ENCODE measurements at regions of chr19 and their contacts with region 1.

Region 1: GRCh38 chr19:39435499-39436349 is at the start of gene RPS16:
- DNase-seq: peak; percentile 97 to 99 (median 99)
- ATAC-seq: peak; percentile 86
- H3K4me3 ChIP-seq: peak within 1 kb of the TSS; percentile 96
- H3K4me3 Mint-ChIP-seq: peak within 1 kb of the TSS; percentile 99
- H3K27ac ChIP-seq: peak within 1 kb of the TSS; percentile 87 to 90
- H3K27ac Mint-ChIP-seq: peak within 1 kb of the TSS; percentile 93
- H3K4me1 ChIP-seq: peaks cover 55% of the 10 kb centered on the region
- H3K4me1 Mint-ChIP-seq: peaks cover 54% of the 10 kb centered on the region
- H3K27me3 ChIP-seq: no peaks in the 10 kb centered on the region
- H3K27me3 Mint-ChIP-seq: no peaks in the 10 kb centered on the region
- CTCF ChIP-seq: no peak
- total RNA-seq, gene RPS16: 4,625 to 4,839 TPM

Region 2: DNA sequence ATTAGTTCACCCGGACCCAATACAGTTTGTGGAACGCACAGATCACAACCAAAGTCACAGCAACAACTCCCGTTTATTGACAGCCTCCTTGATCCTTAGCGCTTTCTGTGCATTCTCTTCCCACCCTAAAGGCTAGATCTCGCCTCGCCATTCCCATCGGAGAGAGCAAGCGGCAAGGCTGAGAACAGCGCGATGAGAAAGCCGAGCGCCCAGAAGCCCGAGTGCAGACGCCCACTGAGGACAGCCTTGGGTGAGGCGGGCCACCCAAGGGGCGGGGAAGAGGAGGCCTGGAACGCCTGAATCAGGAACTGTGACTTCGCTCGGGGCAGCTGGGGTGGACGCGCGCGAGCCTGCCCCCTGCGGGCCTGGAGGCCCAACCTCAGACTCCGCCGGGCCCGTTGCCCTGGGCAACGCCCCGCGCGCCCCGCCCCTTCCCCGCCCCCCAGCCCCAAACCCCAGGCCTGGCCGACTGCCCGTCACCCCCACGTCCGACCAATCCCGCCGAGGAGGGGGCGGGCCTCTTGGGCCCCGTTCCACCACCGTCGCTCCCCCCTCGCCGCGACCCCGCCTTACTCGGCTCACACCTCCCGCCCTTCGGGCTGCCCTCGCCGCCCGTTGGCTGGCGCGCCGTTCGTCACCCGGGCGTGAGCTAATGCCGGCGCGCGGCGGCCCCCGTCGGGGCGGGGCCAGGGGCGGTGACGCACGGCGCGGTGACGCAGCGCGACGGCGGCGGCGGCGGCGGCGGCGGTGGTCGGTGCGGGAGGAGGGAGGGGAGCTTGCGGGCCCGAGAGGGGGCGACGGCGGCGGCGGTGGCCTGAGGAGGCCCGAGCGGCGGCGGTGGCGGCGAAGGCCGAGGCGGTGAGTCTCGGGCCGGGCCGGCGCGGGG is 93.8 kb before region 1 on chr19 and contains the start of gene SAMD4B:
- CTCF ChIA-PET with region 1: no interaction called
- POLR2A ChIA-PET with region 1: interaction called, 26 read pairs
- intact Hi-C with region 1: loop called in 1 of 2 experiments (anchors 5 kb)
- DNase-seq: peak; percentile 98 to 100 (median 99)
- ATAC-seq: peak; percentile 88
- H3K4me3 ChIP-seq: peak within 1 kb of the TSS; percentile 85
- H3K4me3 Mint-ChIP-seq: peak within 1 kb of the TSS; percentile 99
- H3K27ac ChIP-seq: peak within 1 kb of the TSS; percentile 65 to 82
- H3K27ac Mint-ChIP-seq: peak within 1 kb of the TSS; percentile 91
- H3K4me1 ChIP-seq: peaks cover 64% of the 10 kb centered on the region
- H3K4me1 Mint-ChIP-seq: peaks cover 77% of the 10 kb centered on the region
- H3K27me3 ChIP-seq: no peaks in the 10 kb centered on the region
- H3K27me3 Mint-ChIP-seq: no peaks in the 10 kb centered on the region
- CTCF ChIP-seq: peak; percentile 72
- total RNA-seq, gene SAMD4B: 65.0 to 66.9 TPM

Region 3: DNA sequence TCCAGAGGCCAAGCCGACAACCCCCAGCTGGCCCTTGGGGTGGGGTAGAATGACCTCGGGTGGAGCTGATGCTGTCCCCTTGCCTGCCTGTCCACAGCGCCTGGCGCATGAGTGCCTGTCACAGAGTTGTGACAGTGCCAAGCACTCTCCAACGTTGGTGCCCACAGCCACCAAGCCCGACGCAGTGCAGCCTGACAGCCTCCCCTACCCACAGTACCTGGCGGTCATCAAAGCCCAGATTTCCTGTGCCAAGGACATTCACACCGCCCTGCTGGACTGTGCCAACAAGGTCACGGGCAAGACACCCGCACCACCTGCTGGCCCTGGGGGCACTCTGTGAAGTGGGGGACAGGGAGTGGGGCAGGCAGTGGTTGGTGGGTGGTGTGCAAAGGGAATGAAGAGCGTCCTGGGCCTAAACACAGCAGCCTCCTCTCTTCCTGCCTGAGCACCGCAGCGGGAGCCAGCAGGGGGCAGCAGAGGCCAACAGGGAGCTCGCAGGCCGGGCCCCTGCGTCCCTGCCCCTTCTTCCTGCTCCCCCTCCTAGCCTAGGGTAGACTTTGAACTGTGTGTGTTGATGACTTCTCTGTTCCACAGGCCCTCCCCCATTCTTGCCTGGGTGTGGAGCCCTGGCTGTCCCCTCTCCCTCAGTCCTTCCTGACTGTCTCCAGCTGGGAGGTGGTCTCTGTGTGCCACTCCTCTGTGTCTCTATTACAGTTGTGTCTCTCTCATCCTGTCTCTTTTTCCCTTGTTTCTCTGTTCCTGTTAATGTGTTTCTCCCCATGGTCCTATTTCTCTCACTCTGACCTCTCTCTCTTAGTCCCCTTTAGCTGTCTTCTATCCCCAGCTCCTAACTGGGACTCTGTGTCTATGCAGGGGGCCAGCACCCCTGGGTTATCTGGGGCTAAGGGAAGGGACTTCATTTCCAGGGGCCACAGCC is 38.1 kb before region 1 on chr19:
- CTCF ChIA-PET with region 1: interaction called, 10 read pairs
- POLR2A ChIA-PET with region 1: interaction called, 30 read pairs
- intact Hi-C with region 1: no loop called
- DNase-seq: peak; percentile 87 to 98 (median 94)
- ATAC-seq: peak; percentile 43
- H3K4me3 ChIP-seq: peak overlapping the region; percentile 31
- H3K4me3 Mint-ChIP-seq: peak overlapping the region; percentile 63
- H3K27ac ChIP-seq: peak overlapping the region; percentile 90 to 100
- H3K27ac Mint-ChIP-seq: peak overlapping the region; percentile 98
- H3K4me1 ChIP-seq: peaks cover 68% of the 10 kb centered on the region
- H3K4me1 Mint-ChIP-seq: peaks cover 54% of the 10 kb centered on the region
- H3K27me3 ChIP-seq: no peaks in the 10 kb centered on the region
- H3K27me3 Mint-ChIP-seq: no peaks in the 10 kb centered on the region
- CTCF ChIP-seq: peak; percentile 91

Region 4: DNA sequence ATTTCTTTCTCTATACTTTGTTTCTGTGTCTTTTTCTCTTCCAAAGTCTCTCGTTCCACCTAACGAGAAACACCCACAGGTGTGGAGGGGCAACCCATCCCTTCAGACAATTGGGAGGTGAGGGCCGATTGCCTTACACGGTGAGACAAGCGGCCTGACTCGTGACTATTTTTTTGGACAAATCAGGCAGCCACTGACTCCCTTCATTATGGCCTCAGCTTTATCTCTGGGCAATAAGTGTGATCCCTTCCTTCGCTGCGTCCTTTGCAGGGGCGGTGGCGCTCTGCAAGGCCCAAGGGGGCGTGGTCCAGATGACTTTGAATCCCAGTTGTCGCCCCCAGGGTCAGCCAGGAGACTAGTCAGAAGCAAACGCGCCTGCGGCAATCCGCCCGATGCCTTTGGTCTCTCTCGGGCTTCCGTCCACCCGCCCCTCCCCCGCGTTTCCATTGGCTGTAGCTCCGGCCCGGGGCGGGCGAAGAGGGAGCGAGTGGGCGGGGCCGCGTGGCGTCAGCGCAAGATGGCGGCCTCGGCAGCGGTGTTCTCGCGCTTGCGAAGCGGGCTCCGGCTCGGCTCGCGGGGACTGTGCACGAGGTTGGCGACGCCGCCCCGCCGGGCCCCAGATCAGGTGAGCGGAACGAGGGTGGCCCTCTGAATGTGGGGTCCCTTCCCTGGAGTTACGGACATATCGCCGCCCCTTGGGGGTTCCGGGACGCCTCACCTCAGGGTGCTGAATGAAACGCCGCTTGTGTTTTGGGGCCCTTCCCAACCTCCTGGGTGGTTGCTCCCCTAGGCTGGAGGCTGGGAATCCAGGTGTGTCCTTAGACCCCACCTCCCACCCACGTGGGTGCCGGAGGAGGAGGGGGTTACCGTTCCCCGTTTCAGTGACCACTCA is 44.9 kb after region 1 on chr19 and contains the start of gene TIMM50:
- CTCF ChIA-PET with region 1: no interaction called
- POLR2A ChIA-PET with region 1: interaction called, 11 read pairs
- intact Hi-C with region 1: loop called in 1 of 2 experiments (anchors 2 kb)
- DNase-seq: peak; percentile 94 to 99 (median 97)
- ATAC-seq: peak; percentile 97
- H3K4me3 ChIP-seq: peak within 1 kb of the TSS; percentile 99
- H3K4me3 Mint-ChIP-seq: peak within 1 kb of the TSS; percentile 92
- H3K27ac ChIP-seq: peak within 1 kb of the TSS; percentile 62 to 70
- H3K27ac Mint-ChIP-seq: peak within 1 kb of the TSS; percentile 73
- H3K4me1 ChIP-seq: peaks cover 23% of the 10 kb centered on the region
- H3K4me1 Mint-ChIP-seq: peaks cover 31% of the 10 kb centered on the region
- H3K27me3 ChIP-seq: no peaks in the 10 kb centered on the region
- H3K27me3 Mint-ChIP-seq: no peaks in the 10 kb centered on the region
- CTCF ChIP-seq: no peak
- total RNA-seq, gene TIMM50: 38.3 to 43.4 TPM

Region 5: DNA sequence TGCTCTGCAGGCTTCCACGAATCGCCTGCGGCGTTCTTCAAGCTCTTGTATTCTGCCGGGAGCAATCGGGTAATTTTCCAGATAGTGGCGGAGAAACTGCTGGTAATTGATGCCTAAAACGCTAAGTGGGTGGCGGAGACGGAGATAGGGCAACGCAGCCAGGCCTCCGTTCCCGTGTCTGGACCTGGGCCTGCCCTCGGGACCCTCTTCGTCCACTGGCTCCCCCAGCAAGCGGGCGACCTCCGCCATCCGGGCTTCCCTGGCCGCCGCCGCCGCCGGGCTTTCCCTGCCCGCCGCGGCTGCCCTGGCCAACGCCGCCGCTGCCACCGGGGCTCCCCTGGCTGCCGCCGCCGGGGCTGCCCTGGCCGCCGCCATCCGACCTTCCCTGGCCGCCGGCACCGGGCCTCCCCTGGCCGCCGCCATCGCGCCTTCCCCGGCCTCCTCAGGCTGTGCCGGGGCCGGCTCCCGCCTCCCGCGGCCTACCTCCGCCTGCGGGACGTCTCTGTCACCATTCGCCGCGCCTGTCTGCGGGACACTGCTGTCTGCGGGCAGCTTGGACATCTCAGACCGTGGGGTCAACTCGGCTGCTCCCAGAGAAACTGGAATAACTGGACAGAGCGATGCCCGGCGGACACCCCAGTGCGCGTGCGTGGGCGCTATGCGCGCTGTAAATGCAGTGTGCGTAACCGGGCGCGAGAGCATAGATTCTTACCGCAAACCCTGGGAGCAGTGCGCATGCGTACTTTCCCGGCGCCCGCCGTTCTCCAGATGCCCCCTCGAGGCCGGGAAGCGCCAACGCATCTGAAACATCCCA is 104.0 kb after region 1 on chr19 and contains the start of gene EID2:
- CTCF ChIA-PET with region 1: no interaction called
- POLR2A ChIA-PET with region 1: interaction called, 11 read pairs
- intact Hi-C with region 1: loop called in 1 of 2 experiments (anchors 2 kb)
- DNase-seq: peak; percentile 88 to 98 (median 93)
- ATAC-seq: peak; percentile 91
- H3K4me3 ChIP-seq: peak within 1 kb of the TSS; percentile 73
- H3K4me3 Mint-ChIP-seq: peak within 1 kb of the TSS; percentile 98
- H3K27ac ChIP-seq: peak within 1 kb of the TSS; percentile 93
- H3K27ac Mint-ChIP-seq: peak within 1 kb of the TSS; percentile 96
- H3K4me1 ChIP-seq: peaks cover 32% of the 10 kb centered on the region
- H3K4me1 Mint-ChIP-seq: peaks cover 71% of the 10 kb centered on the region
- H3K27me3 ChIP-seq: no peaks in the 10 kb centered on the region
- H3K27me3 Mint-ChIP-seq: no peaks in the 10 kb centered on the region
- CTCF ChIP-seq: no peak
- total RNA-seq, gene EID2: 17.2 to 18.1 TPM

Region 6: GRCh38 chr19:39833464-39834286 is 398.0 kb after region 1 on chr19 and contains the start of gene DYRK1B:
- CTCF ChIA-PET with region 1: no interaction called
- POLR2A ChIA-PET with region 1: interaction called, 7 read pairs
- intact Hi-C with region 1: loop called in 1 of 2 experiments (anchors 5 kb)
- DNase-seq: peak; percentile 96 to 100 (median 98)
- ATAC-seq: peak; percentile 86
- H3K4me3 ChIP-seq: peak within 1 kb of the TSS; percentile 88
- H3K4me3 Mint-ChIP-seq: peak within 1 kb of the TSS; percentile 81
- H3K27ac ChIP-seq: peak within 1 kb of the TSS; percentile 96 to 99
- H3K27ac Mint-ChIP-seq: peak within 1 kb of the TSS; percentile 68
- H3K4me1 ChIP-seq: peaks cover 29% of the 10 kb centered on the region
- H3K4me1 Mint-ChIP-seq: peaks cover 20% of the 10 kb centered on the region
- H3K27me3 ChIP-seq: no peaks in the 10 kb centered on the region
- H3K27me3 Mint-ChIP-seq: no peaks in the 10 kb centered on the region
- CTCF ChIP-seq: no peak
- total RNA-seq, gene DYRK1B: 18.9 to 19.4 TPM

Region 7: DNA sequence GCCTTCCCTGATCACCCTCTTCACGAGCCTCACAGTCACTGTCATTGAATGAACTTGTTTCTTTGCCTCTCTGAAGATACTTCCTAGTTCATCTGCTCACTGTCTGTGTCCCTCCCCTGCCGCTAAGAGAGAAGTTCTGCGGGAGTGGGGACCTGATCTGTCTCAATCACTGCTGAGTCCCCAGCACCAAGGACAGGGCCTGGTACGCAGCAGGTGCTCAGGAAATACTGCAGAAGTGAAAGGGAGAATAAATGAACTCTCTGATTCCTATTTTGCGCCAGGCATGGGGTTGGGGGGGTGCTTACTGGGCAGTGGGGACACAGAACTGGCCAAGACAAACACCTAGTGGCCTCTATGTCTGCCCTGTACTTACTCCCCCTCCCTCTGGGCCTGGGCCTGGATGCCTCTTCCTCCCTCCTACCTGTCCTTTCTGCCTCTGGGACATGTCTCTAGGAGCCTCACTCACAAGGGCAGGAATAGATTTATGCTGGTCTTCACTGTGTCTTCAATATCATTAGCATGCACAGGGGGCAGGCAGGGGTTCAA is 481.2 kb after region 1 on chr19:
- CTCF ChIA-PET with region 1: no interaction called
- POLR2A ChIA-PET with region 1: no interaction called
- intact Hi-C with region 1: no loop called
- DNase-seq: no peak
- ATAC-seq: no peak
- H3K4me3 ChIP-seq: no peak overlapping the region
- H3K4me3 Mint-ChIP-seq: peak overlapping the region; percentile 30
- H3K27ac ChIP-seq: no peak overlapping the region
- H3K27ac Mint-ChIP-seq: peak overlapping the region; percentile 42
- H3K4me1 ChIP-seq: peaks cover 6% of the 10 kb centered on the region
- H3K4me1 Mint-ChIP-seq: peaks cover 21% of the 10 kb centered on the region
- H3K27me3 ChIP-seq: no peaks in the 10 kb centered on the region
- H3K27me3 Mint-ChIP-seq: no peaks in the 10 kb centered on the region
- CTCF ChIP-seq: no peak

Region 8: DNA sequence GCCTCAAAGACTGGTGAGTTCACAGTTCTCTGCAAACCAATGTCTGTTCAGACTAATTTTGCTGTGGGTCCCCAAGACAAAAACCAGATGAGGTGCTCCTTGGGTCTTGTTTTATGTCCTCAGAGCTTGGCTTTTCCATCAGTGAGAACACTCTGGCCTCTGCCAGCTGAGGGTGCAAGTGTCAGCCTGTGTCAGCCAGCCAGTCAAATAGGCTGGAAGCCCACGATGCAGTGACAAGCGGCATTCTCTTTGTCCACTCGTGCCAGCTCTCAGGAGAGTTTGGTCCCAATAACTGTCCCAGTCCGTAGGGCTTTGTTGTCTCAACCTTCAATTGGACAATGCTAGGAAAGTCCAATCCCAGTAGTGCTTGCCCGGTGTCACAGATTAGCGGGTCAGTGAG is 858.8 kb after region 1 on chr19:
- CTCF ChIA-PET with region 1: no interaction called
- POLR2A ChIA-PET with region 1: no interaction called
- intact Hi-C with region 1: no loop called
- DNase-seq: no peak
- ATAC-seq: no peak
- H3K4me3 ChIP-seq: no peak overlapping the region
- H3K4me3 Mint-ChIP-seq: no peak overlapping the region
- H3K27ac ChIP-seq: no peak overlapping the region
- H3K27ac Mint-ChIP-seq: no peak overlapping the region
- H3K4me1 ChIP-seq: no peaks in the 10 kb centered on the region
- H3K4me1 Mint-ChIP-seq: no peaks in the 10 kb centered on the region
- H3K27me3 ChIP-seq: no peaks in the 10 kb centered on the region
- H3K27me3 Mint-ChIP-seq: no peaks in the 10 kb centered on the region
- CTCF ChIP-seq: no peak